A673 (cell line): ENCODE measurements at regions of chr6 and their contacts with region 1.

Region 1: DNA sequence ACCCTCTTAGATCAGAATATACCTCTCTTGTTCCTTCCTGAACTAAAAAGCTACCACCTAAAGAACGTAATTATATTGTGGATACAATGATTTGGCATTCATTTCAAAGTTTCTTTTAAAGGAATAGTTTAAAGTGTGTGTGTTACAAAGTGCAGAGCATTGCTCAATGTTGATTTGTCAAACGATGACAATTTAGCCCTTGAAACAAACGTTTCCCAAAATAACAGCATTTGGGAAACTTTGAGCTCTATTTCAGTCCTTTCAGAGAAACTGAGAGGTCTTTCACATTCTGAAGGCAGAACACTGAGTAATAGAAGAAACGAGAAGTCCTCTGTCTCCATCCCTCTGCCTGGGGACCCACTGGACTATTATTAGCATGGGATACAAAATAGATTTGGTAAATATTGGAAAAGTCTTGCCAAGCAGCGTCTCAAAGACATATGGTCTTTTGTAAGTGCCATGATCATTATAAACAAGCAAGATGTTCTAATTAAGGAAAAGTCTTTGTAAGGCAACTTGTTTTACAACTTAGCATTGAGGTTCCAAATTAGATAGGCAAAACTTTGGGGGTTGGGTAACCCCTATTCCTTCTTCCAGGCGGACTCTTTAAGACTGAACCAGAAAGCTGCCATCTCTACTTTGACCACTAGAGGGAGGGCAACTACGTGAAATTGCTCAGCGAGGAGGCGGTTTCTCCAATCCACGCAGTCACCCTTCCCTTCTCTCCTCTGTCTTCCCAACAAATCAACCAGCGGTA is 208.8 kb downstream of the RNF144B start:
- DNase-seq: peak; percentile 95
- H3K4me3 ChIP-seq: no peak overlapping the region
- H3K27ac ChIP-seq: peak overlapping the region; percentile 72
- H3K4me1 ChIP-seq: peaks cover 48% of the 10 kb centered on the region
- H3K27me3 ChIP-seq: no peaks in the 10 kb centered on the region
- CTCF ChIP-seq: peak; percentile 96

Region 2: DNA sequence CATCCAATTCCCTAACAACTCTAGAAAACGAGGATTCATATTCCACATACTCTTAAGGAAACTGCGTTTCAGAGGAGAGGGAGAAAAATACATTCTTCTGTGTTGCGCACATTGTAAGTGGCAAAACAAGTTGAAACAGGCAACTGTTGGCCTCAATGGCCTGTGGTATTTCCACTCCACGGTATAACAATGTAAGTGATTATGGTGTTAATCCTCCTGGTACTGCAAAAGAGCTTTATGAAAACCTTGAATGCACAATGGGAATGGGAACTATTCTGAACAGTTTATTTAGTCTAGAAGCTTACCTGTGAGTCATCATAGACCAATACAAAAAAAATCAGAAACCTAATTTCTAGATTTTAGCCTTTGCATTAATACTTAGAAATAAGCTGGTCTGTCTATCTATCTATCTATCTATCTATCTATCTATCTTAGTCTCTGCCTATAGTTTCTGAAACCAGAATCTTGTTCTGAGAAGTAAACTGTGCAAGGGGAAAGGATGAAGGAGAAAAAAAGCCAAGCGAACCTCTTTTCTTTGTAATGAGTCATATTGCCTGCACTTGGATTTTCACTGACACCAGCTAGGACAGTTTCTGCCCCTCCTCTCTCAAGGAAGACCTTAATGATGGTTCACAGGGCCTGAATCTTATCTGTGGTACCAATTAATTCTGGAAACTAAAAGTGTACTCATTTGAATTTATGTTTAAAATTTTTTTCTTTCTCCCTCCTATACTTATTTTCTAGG is 107.3 kb before region 1 on chr6:
- CTCF ChIA-PET with region 1: no interaction called
- POLR2A ChIA-PET with region 1: no interaction called
- intact Hi-C with region 1: no loop called
- DNase-seq: no peak
- H3K4me3 ChIP-seq: no peak overlapping the region
- H3K27ac ChIP-seq: no peak overlapping the region
- H3K4me1 ChIP-seq: no peaks in the 10 kb centered on the region
- H3K27me3 ChIP-seq: no peaks in the 10 kb centered on the region
- CTCF ChIP-seq: no peak

Region 3: GRCh38 chr6:18545726-18546125 is 50.2 kb before region 1 on chr6:
- CTCF ChIA-PET with region 1: interaction called, 10 read pairs
- POLR2A ChIA-PET with region 1: no interaction called
- intact Hi-C with region 1: no loop called
- DNase-seq: peak; percentile 66
- H3K4me3 ChIP-seq: no peak overlapping the region
- H3K27ac ChIP-seq: peak overlapping the region; percentile 41
- H3K4me1 ChIP-seq: no peaks in the 10 kb centered on the region
- H3K27me3 ChIP-seq: no peaks in the 10 kb centered on the region
- CTCF ChIP-seq: no peak

Region 4: GRCh38 chr6:18748314-18748713 is 152.4 kb after region 1 on chr6:
- CTCF ChIA-PET with region 1: no interaction called
- POLR2A ChIA-PET with region 1: no interaction called
- intact Hi-C with region 1: loop called (anchors 5 kb)
- DNase-seq: no peak
- H3K4me3 ChIP-seq: no peak overlapping the region
- H3K27ac ChIP-seq: peak overlapping the region; percentile 13
- H3K4me1 ChIP-seq: peaks cover 26% of the 10 kb centered on the region
- H3K27me3 ChIP-seq: no peaks in the 10 kb centered on the region
- CTCF ChIP-seq: no peak

Region 5: DNA sequence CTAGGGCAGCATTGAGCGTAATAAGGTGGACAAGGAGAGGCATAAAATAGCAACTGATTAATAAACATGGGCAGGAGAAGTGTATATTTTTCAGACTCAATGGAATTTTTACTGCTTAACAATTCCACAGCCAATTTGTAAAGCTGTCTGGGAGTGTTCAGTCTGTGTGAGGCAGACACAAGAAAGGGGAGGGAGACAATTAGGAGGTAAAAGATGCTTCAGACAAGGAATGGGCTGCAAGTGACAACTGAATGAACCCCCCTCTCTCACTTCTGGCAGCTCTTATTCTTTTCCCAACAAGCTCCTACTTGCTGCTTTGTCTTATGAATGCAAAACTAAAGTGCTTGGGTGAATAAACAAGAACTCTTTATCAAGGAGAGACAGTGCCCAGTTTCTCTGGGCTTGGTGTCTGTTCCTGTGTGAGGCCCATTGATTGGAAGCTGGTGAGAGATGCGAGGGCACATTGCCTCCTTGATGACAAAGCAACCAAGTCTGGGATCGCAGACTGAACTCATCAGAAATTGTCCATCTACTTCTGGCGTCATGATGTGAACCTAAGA is 366.5 kb after region 1 on chr6:
- CTCF ChIA-PET with region 1: no interaction called
- POLR2A ChIA-PET with region 1: no interaction called
- intact Hi-C with region 1: no loop called
- DNase-seq: no peak
- H3K4me3 ChIP-seq: no peak overlapping the region
- H3K27ac ChIP-seq: no peak overlapping the region
- H3K4me1 ChIP-seq: no peaks in the 10 kb centered on the region
- H3K27me3 ChIP-seq: no peaks in the 10 kb centered on the region
- CTCF ChIP-seq: no peak

Region 6: GRCh38 chr6:18990059-18990978 is 394.4 kb after region 1 on chr6:
- CTCF ChIA-PET with region 1: no interaction called
- POLR2A ChIA-PET with region 1: no interaction called
- intact Hi-C with region 1: loop called (anchors 5 kb)
- DNase-seq: peak; percentile 90
- H3K4me3 ChIP-seq: no peak overlapping the region
- H3K27ac ChIP-seq: no peak overlapping the region
- H3K4me1 ChIP-seq: peaks cover 6% of the 10 kb centered on the region
- H3K27me3 ChIP-seq: no peaks in the 10 kb centered on the region
- CTCF ChIP-seq: peak; percentile 94

Region 7: DNA sequence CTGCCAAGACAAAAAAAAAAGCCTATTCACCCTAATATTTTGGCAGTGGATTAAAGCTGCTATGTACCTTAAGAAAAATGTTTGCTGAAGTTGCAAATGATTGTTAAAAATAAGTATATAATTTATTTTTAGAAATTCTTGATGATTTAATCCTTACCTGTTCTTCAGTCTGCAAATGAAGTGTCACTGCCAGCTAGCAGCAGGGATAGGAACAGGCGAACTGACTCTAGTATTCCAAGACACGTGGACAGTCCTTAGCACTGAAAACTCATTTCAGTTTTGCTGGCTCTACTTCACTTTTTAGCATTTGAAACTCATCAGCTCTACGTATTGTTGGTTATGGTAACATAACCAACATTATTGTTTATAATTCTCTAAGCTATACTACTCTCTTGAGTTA is 1036.8 kb after region 1 on chr6:
- CTCF ChIA-PET with region 1: no interaction called
- POLR2A ChIA-PET with region 1: no interaction called
- intact Hi-C with region 1: loop called (anchors 10 kb)
- DNase-seq: no peak
- H3K4me3 ChIP-seq: no peak overlapping the region
- H3K27ac ChIP-seq: no peak overlapping the region
- H3K4me1 ChIP-seq: peaks cover 34% of the 10 kb centered on the region
- H3K27me3 ChIP-seq: no peaks in the 10 kb centered on the region
- CTCF ChIP-seq: no peak

Region 8: GRCh38 chr6:20056350-20056992 is 1460.5 kb after region 1 on chr6:
- CTCF ChIA-PET with region 1: no interaction called
- POLR2A ChIA-PET with region 1: no interaction called
- intact Hi-C with region 1: loop called (anchors 5 kb)
- DNase-seq: peak; percentile 79
- H3K4me3 ChIP-seq: no peak overlapping the region
- H3K27ac ChIP-seq: no peak overlapping the region
- H3K4me1 ChIP-seq: peaks cover 5% of the 10 kb centered on the region
- H3K27me3 ChIP-seq: no peaks in the 10 kb centered on the region
- CTCF ChIP-seq: peak; percentile 78